ENCODE measurements at regions of chr6 and their contacts with region 1.

Region 1: GRCh38 chr6:38639498-38640215 is at the start of gene BTBD9:
- DNase-seq: peak; percentile 71 to 94 (median 80)
- ATAC-seq: peak; percentile 79
- H3K4me3 ChIP-seq: peak within 1 kb of the TSS; percentile 81 to 87
- H3K4me3 Mint-ChIP-seq: peak within 1 kb of the TSS; percentile 91
- H3K27ac ChIP-seq: peak within 1 kb of the TSS; percentile 92 to 99
- H3K27ac Mint-ChIP-seq: peak within 1 kb of the TSS; percentile 85
- H3K4me1 ChIP-seq: peaks cover 32% of the 10 kb centered on the region
- H3K4me1 Mint-ChIP-seq: peaks cover 52% of the 10 kb centered on the region
- H3K27me3 ChIP-seq: no peaks in the 10 kb centered on the region
- H3K27me3 Mint-ChIP-seq: no peaks in the 10 kb centered on the region
- CTCF ChIP-seq: no peak
- total RNA-seq, gene BTBD9: 54.2 to 54.5 TPM

Region 2: DNA sequence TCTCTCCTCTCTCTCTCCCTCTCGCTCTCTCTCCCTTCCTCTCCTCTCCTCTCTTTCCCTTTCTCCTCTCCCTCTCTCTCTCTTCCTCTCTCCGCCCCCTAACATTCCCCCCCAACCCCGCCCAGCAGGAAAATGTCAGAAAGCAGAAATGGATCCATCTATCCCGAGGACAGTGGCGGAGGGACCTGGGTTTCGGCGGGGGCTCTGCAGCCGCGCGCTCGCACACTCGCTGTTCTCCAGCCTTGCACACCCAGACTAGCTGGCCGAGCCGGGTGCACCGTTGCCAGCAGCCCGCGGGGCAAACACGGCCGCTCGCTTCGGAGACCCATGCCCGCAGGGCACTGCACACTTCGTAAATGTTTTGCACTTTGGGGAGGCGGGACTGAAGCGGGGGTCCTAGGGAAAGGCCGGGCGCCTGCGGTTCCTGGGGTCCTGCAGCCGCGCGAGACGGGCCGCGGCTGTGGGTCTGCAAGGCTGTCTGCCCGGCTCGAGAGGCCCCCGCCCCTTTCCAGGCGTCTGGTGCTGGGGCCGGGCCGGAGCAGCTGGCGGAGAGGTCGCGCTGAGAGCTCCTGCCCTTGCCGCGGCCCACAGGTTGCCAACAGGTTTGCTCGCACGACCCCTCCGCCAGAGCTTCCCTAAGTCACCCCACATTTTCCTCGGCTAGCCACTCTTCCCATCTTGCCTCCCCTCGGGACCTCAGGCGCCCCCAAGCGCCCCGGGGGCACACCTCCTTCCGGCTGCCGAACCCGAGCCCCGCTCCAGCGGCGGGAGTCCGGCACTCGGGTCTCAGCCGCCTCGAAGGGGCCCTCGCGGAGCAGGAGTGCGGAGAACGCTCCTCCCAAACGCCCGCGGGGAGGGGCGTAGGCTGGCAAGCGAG is 941.2 kb before region 1 on chr6:
- CTCF ChIA-PET with region 1: no interaction called
- POLR2A ChIA-PET with region 1: no interaction called
- intact Hi-C with region 1: loop called (anchors 5 to 10 kb)
- DNase-seq: peak; percentile 31 to 86 (median 67)
- ATAC-seq: peak; percentile 29
- H3K4me3 ChIP-seq: peak overlapping the region; percentile 80 to 84
- H3K4me3 Mint-ChIP-seq: peak overlapping the region; percentile 99
- H3K27ac ChIP-seq: peak overlapping the region in 1 of 2 experiments; percentile 85
- H3K27ac Mint-ChIP-seq: peak overlapping the region; percentile 97
- H3K4me1 ChIP-seq: peaks cover 11% of the 10 kb centered on the region
- H3K4me1 Mint-ChIP-seq: peaks cover 18% of the 10 kb centered on the region
- H3K27me3 ChIP-seq: peaks cover 9 to 25% of the 10 kb centered on the region in 2 experiments
- H3K27me3 Mint-ChIP-seq: peaks cover 31% of the 10 kb centered on the region
- CTCF ChIP-seq: no peak

Region 3: GRCh38 chr6:38570750-38571149 is 68.9 kb before region 1 on chr6:
- CTCF ChIA-PET with region 1: no interaction called
- POLR2A ChIA-PET with region 1: interaction called, 3 read pairs
- intact Hi-C with region 1: loop called (anchors 1 to 2 kb)
- DNase-seq: peak in 2 of 9 experiments; percentile 5 to 18
- ATAC-seq: no peak
- H3K4me3 ChIP-seq: no peak overlapping the region
- H3K4me3 Mint-ChIP-seq: no peak overlapping the region
- H3K27ac ChIP-seq: no peak overlapping the region
- H3K27ac Mint-ChIP-seq: no peak overlapping the region
- H3K4me1 ChIP-seq: peaks cover 7% of the 10 kb centered on the region
- H3K4me1 Mint-ChIP-seq: peaks cover 21% of the 10 kb centered on the region
- H3K27me3 ChIP-seq: no peaks in the 10 kb centered on the region
- H3K27me3 Mint-ChIP-seq: no peaks in the 10 kb centered on the region
- CTCF ChIP-seq: peak; percentile 41

Region 4: DNA sequence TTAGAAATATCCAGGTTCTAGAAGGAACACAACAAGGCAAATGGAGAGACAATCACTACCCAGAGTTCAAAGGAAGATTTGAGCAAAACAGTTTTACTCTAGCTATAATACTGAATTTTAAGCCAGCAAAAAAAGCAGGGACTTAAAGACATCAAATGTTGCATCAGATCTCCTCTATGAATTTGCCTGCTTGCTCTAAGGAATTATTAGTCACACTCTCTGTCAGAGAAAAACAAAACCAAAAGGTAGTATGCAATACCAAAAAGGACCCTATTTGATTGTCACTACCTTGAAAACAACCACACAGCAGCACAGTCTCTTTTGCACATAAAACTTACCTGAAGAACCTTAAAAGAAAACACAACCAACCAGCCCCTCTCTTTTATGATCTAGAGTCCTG is 46.2 kb before region 1 on chr6:
- CTCF ChIA-PET with region 1: no interaction called
- POLR2A ChIA-PET with region 1: no interaction called
- intact Hi-C with region 1: no loop called
- DNase-seq: no peak
- ATAC-seq: no peak
- H3K4me3 ChIP-seq: no peak overlapping the region
- H3K4me3 Mint-ChIP-seq: no peak overlapping the region
- H3K27ac ChIP-seq: no peak overlapping the region
- H3K27ac Mint-ChIP-seq: no peak overlapping the region
- H3K4me1 ChIP-seq: no peaks in the 10 kb centered on the region
- H3K4me1 Mint-ChIP-seq: no peaks in the 10 kb centered on the region
- H3K27me3 ChIP-seq: no peaks in the 10 kb centered on the region
- H3K27me3 Mint-ChIP-seq: no peaks in the 10 kb centered on the region
- CTCF ChIP-seq: no peak

Region 5: GRCh38 chr6:38702558-38703397 is 63.1 kb after region 1 on chr6 and contains the start of gene GLO1:
- CTCF ChIA-PET with region 1: no interaction called
- POLR2A ChIA-PET with region 1: interaction called, 12 read pairs
- intact Hi-C with region 1: loop called (anchors 1 kb)
- DNase-seq: peak; percentile 91 to 98 (median 96)
- ATAC-seq: peak; percentile 99
- H3K4me3 ChIP-seq: peak within 1 kb of the TSS; percentile 64 to 88
- H3K4me3 Mint-ChIP-seq: peak within 1 kb of the TSS; percentile 83
- H3K27ac ChIP-seq: peak within 1 kb of the TSS; percentile 78 to 90
- H3K27ac Mint-ChIP-seq: peak within 1 kb of the TSS; percentile 92
- H3K4me1 ChIP-seq: no peaks in the 10 kb centered on the region
- H3K4me1 Mint-ChIP-seq: peaks cover 24% of the 10 kb centered on the region
- H3K27me3 ChIP-seq: no peaks in the 10 kb centered on the region
- H3K27me3 Mint-ChIP-seq: peaks cover 6% of the 10 kb centered on the region
- CTCF ChIP-seq: no peak
- total RNA-seq, gene GLO1: 23.1 to 23.9 TPM

Region 6: DNA sequence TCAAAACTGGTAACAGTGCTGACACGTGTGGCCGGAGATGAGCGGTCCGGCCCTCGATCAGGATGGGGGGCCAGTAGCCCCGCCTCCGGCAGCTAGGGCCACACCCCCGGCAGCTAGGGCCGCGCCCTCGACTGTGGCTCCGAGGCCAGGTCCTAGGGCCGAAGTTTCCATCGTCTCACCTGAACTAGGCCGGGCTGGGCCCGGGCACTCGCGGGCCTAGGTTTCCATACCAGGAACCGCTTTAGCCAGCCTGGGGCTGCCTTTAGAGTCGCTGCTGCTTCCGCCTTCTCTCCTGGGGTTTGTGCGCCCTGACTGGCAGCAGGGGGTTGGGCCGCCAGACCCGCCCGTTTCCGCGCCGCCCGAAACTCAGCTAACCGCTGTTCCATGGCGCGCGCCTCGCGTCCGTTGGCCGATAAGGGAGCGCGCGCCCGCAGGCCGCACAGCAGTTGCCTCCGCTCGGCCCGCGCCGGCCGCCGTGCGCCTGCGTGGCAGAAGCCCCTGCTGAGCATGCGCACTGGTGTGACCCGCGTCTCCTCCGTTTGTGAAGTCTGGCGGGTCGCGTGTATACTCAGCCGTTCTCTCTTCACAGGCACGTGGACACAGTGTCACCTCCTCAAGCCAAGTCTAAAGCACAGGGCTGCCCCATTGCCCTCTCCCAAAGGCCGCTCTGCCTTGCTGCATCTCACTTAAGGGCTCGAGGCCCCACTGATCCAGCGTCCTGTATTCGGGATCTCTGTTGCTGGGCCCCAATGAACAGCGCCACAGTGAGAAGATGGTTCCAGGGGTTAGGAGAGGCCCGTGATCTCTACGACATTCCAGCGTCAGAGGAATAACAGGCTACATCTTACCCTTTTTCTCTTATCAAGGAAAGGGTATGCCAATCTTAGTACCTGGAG is 475.3 kb after region 1 on chr6 and contains the start of gene SAYSD1:
- CTCF ChIA-PET with region 1: no interaction called
- POLR2A ChIA-PET with region 1: no interaction called
- intact Hi-C with region 1: loop called in 1 of 2 experiments (anchors 10 kb)
- DNase-seq: peak; percentile 80 to 98 (median 91)
- ATAC-seq: peak; percentile 79
- H3K4me3 ChIP-seq: peak within 1 kb of the TSS; percentile 64 to 71
- H3K4me3 Mint-ChIP-seq: peak within 1 kb of the TSS; percentile 96
- H3K27ac ChIP-seq: peak within 1 kb of the TSS; percentile 80 to 88
- H3K27ac Mint-ChIP-seq: peak within 1 kb of the TSS; percentile 98
- H3K4me1 ChIP-seq: peaks cover 45% of the 10 kb centered on the region
- H3K4me1 Mint-ChIP-seq: peaks cover 57% of the 10 kb centered on the region
- H3K27me3 ChIP-seq: no peaks in the 10 kb centered on the region
- H3K27me3 Mint-ChIP-seq: no peaks in the 10 kb centered on the region
- CTCF ChIP-seq: no peak
- total RNA-seq, gene SAYSD1: 21.8 to 24.3 TPM

Measured in CD8-positive, alpha-beta T cell (primary cell).